Stomach (tissue), 19 donors: ENCODE measurements at regions of chr7 and their contacts with region 1.

Region 1: DNA sequence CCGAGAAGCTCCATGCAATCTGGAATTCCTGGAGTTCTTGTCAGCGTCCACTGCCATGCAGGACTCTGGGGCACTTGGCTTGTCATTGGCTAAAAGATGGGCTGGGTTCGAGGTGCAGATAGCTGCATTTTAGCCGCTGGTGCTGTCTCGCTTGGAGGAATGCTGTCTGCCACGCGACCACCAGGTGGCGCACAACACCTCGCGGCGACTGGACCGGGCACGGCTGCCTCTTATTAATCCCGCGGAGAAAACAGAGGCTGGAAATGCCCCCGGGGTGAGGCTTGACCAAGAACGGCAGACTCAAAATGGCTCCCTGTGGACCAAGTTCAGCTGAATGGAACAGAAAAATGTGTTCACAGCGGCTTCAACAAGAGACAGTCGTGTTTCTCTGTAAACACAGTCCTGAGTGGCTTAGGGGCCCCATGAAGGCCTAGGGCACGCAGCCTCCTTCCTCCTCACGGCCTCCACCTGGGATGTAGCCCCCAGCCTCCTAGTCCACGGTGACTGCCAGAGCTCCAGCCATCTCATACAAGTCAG is 46.2 kb downstream of the AOC1 start:
- DNase-seq: peak; percentile 81 to 91
- H3K4me3 ChIP-seq: no peak overlapping the region
- H3K27ac ChIP-seq: peak overlapping the region in 1 of 5 donors; percentile 14
- H3K4me1 ChIP-seq: peaks cover 0 to 34% (median 19%) of the 10 kb centered on the region in 4 donors
- H3K27me3 ChIP-seq: peaks cover 0 to 42% (median 10%) of the 10 kb centered on the region in 3 donors
- CTCF ChIP-seq: peak in 6 of 7 experiments; percentile 45 to 95 (median 92)
- EP300 ChIP-seq: no peak
- POLR2A ChIP-seq: no peak

Region 2: GRCh38 chr7:150988230-150989226 is 90.0 kb after region 1 on chr7:
- intact Hi-C with region 1: loop called (anchors 5 kb)
- DNase-seq: peak in 1 of 2 donors; percentile 90
- H3K4me3 ChIP-seq: peak overlapping the region in 1 of 4 donors; percentile 5
- H3K27ac ChIP-seq: peak overlapping the region in 4 of 5 donors; percentile 53 to 73 (median 66)
- H3K4me1 ChIP-seq: peaks cover 4 to 31% (median 20%) of the 10 kb centered on the region in 4 donors
- H3K27me3 ChIP-seq: peaks cover 0 to 29% (median 13%) of the 10 kb centered on the region in 3 donors
- CTCF ChIP-seq: peak in 5 of 7 experiments; percentile 60 to 84 (median 74)
- EP300 ChIP-seq: no peak
- POLR2A ChIP-seq: no peak

Region 3: GRCh38 chr7:151484971-151485707 is 586.6 kb after region 1 on chr7:
- intact Hi-C with region 1: no loop called
- DNase-seq: peak in 1 of 2 donors; percentile 49
- H3K4me3 ChIP-seq: no peak overlapping the region
- H3K27ac ChIP-seq: peak overlapping the region in 1 of 5 donors; percentile 17
- H3K4me1 ChIP-seq: peaks cover 0 to 77% (median 33%) of the 10 kb centered on the region in 4 donors
- H3K27me3 ChIP-seq: no peaks in the 10 kb centered on the region
- CTCF ChIP-seq: no peak
- EP300 ChIP-seq: no peak
- POLR2A ChIP-seq: no peak